CD4-positive, alpha-beta memory T cell (primary cell): ENCODE measurements at regions of chr7 and their contacts with region 1.

Region 1: DNA sequence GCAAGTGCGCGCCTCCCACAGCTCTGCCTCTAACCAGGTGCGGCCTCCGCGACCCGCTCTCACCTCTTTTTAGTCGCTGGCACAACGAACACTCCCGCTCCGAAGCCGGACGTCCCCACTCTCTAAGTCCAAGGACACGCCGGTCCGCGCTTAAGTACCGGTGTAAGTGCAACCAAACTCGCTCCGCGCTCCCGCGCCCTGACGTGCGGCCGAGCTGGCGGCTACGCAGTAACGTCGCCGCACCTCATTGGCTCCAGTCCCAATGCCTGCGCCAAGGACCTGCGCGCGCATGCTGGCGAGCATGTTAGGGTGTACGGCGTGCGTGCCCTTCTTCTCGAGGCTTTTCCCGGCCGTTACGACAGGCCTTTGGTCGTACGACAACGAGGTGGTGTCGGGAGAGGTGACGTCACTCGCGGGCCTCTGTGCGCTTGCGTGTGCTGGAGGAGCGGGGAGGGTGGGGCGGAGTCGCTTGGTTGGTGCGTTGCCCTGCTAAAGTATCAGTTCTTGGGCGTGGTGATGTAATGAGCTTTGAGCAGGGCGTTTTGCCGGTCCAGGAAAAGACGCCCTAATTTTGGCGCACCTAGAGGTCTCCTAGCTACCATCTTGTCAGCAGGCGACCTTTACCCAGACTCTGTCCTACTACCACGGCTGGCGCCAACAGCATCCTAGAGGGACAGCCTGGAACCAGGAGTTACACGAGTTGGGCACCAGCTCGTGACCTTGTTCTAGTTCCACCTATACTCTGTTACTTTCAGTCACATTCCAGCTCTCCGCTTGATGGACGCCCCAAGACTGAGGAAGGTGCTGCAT is at the start of gene CYCS:
- DNase-seq: peak; percentile 99 to 100 (median 99)
- H3K4me3 ChIP-seq: peak within 1 kb of the TSS; percentile 72 to 82
- H3K4me3 Mint-ChIP-seq: peak within 1 kb of the TSS; percentile 97 to 100 (median 100)
- H3K27ac ChIP-seq: peak within 1 kb of the TSS; percentile 97
- H3K27ac Mint-ChIP-seq: peak within 1 kb of the TSS; percentile 96 to 100 (median 100)
- H3K4me1 ChIP-seq: peaks cover 9% of the 10 kb centered on the region
- H3K4me1 Mint-ChIP-seq: peaks cover 14 to 26% (median 15%) of the 10 kb centered on the region in 4 donors
- H3K27me3 ChIP-seq: no peaks in the 10 kb centered on the region
- H3K27me3 Mint-ChIP-seq: no peaks in the 10 kb centered on the region
- total RNA-seq, gene CYCS: 46.9 to 54.2 TPM

Region 2: DNA sequence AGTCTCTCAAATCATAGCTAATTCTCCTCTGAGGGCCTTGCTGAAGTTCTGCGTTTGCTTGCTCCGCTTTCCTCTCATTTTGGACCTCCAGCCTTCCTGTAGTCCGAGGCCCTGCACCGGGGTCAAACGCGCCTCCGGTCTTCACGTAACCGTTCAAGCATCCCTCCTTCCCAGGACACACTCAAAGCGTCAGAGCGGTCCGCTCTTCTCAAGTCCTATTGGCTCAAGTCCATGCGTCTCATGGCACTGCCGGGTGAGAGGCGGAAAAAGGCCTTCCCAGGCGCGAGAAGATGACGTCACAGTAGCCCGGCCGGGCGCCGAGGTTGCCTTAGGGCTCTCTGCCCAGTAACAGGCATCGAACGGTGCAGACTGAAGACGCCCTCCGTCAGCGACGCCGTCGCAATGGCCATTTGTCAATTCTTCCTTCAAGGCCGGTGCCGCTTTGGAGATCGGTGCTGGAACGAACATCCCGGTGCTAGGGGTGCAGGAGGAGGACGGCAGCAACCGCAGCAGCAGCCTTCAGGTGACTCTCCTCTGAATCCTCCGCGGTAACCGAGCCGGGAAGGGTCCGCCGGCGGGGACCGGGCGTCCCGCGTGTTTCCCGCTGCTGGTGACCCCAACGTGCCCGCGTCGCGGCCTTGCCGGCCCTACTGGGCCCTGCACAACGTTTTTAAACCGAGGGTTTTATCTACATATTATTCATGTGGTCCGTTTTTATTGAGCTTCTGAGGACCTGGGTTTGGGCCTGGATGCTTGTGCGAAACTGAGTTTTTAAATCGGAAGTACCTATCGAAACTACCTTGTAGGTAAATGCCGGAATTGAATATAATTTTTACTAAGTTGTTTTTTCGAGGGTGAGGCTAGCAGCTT is 1943.4 kb before region 1 on chr7 and contains the start of gene NUP42:
- CTCF ChIA-PET with region 1: no interaction called
- POLR2A ChIA-PET with region 1: interaction called, 3 read pairs
- intact Hi-C with region 1: loop called (anchors 2 kb)
- DNase-seq: peak; percentile 93 to 96 (median 95)
- H3K4me3 ChIP-seq: peak within 1 kb of the TSS; percentile 95 to 98
- H3K4me3 Mint-ChIP-seq: peak within 1 kb of the TSS; percentile 94 to 100 (median 98)
- H3K27ac ChIP-seq: peak within 1 kb of the TSS; percentile 90
- H3K27ac Mint-ChIP-seq: peak within 1 kb of the TSS; percentile 96 to 100 (median 99)
- H3K4me1 ChIP-seq: peaks cover 38% of the 10 kb centered on the region
- H3K4me1 Mint-ChIP-seq: peaks cover 24 to 43% (median 27%) of the 10 kb centered on the region in 4 donors
- H3K27me3 ChIP-seq: no peaks in the 10 kb centered on the region
- H3K27me3 Mint-ChIP-seq: peaks cover 0 to 2% of the 10 kb centered on the region in 2 donors
- total RNA-seq, gene NUP42: 33.3 to 37.8 TPM

Region 3: GRCh38 chr7:23679898-23680413 is 1445.4 kb before region 1 on chr7 and contains the start of gene FAM221A:
- CTCF ChIA-PET with region 1: no interaction called
- POLR2A ChIA-PET with region 1: interaction called, 3 read pairs
- intact Hi-C with region 1: loop called (anchors 10 kb)
- DNase-seq: peak; percentile 71 to 86 (median 77)
- H3K4me3 ChIP-seq: peak within 1 kb of the TSS; percentile 79 to 83
- H3K4me3 Mint-ChIP-seq: peak within 1 kb of the TSS; percentile 93 to 97 (median 96)
- H3K27ac ChIP-seq: peak within 1 kb of the TSS; percentile 68
- H3K27ac Mint-ChIP-seq: peak within 1 kb of the TSS; percentile 78 to 93 (median 87)
- H3K4me1 ChIP-seq: peaks cover 4% of the 10 kb centered on the region
- H3K4me1 Mint-ChIP-seq: peaks cover 7 to 30% (median 16%) of the 10 kb centered on the region in 4 donors
- H3K27me3 ChIP-seq: no peaks in the 10 kb centered on the region
- H3K27me3 Mint-ChIP-seq: peaks cover 0 to 4% of the 10 kb centered on the region in 2 donors
- total RNA-seq, gene FAM221A: 6.8 to 7.3 TPM

Region 4: DNA sequence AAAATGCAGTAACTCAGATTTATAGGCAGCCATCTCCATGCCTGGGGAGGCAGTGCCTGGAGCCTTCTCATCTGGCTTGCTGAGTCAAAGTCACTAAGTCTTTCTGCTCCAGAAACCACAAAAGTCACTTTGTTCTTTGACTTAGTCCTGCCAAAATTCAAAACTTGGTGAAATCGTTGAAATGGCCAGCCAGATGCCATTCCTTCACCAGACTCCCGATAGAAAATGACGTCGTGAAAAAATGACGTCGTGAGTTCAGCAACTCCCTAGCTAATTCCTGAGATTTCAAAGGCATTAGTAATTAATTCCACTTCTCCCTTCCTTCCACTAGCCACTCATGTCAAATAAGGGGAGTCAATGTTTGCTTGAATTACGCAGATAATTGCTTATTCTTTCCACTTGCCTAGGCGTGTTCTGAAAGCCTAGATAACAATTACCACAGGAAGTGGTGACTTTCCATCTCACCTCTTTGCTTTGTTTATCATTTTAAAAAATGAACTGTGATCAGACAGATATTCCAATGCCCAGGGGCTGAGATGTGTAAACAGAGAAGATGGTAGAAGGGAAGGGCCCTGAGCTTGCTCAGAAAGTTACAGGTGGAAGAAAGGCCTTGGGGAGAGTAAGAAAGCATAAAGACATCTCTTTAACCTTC is 96.8 kb before region 1 on chr7:
- CTCF ChIA-PET with region 1: no interaction called
- POLR2A ChIA-PET with region 1: interaction called, 12 read pairs
- intact Hi-C with region 1: no loop called
- DNase-seq: peak; percentile 54 to 78 (median 71)
- H3K4me3 ChIP-seq: no peak overlapping the region
- H3K4me3 Mint-ChIP-seq: peak overlapping the region in 7 of 8 donors; percentile 61 to 92 (median 78)
- H3K27ac ChIP-seq: peak overlapping the region; percentile 53
- H3K27ac Mint-ChIP-seq: peak overlapping the region; percentile 67 to 97 (median 94)
- H3K4me1 ChIP-seq: peaks cover 55% of the 10 kb centered on the region
- H3K4me1 Mint-ChIP-seq: peaks cover 25 to 78% (median 62%) of the 10 kb centered on the region in 4 donors
- H3K27me3 ChIP-seq: no peaks in the 10 kb centered on the region
- H3K27me3 Mint-ChIP-seq: peaks cover 0 to 1% of the 10 kb centered on the region in 2 donors

Region 5: DNA sequence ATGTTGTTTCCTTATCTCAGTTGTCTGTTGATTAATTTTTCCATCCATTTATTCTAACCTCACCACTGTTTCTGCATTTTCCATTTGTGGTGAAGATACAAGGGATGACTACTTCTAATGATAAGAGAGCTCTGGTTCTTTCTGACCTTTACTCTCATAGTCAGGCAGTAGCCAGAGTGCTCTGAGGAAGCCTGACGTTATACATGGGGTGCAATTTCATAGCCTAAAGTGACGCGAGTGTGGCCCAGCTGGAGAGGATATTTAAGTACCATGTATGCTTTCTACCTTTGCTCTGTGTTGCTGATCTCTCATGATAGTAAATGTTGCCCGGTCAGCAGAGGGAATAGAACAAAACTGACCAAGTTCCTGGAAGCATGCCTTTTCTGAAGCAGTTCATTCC is 33.6 kb after region 1 on chr7:
- CTCF ChIA-PET with region 1: interaction called, 8 read pairs
- POLR2A ChIA-PET with region 1: interaction called, 4 read pairs
- intact Hi-C with region 1: loop called (anchors 1 kb)
- DNase-seq: no peak
- H3K4me3 ChIP-seq: no peak overlapping the region
- H3K4me3 Mint-ChIP-seq: no peak overlapping the region
- H3K27ac ChIP-seq: no peak overlapping the region
- H3K27ac Mint-ChIP-seq: no peak overlapping the region
- H3K4me1 ChIP-seq: no peaks in the 10 kb centered on the region
- H3K4me1 Mint-ChIP-seq: peaks cover 0 to 4% (median 2%) of the 10 kb centered on the region in 4 donors
- H3K27me3 ChIP-seq: no peaks in the 10 kb centered on the region
- H3K27me3 Mint-ChIP-seq: no peaks in the 10 kb centered on the region

Region 6: GRCh38 chr7:25179771-25180591 is 54.6 kb after region 1 on chr7:
- CTCF ChIA-PET with region 1: interaction called, 9 read pairs
- POLR2A ChIA-PET with region 1: interaction called, 13 read pairs
- intact Hi-C with region 1: loop called (anchors 1 kb)
- DNase-seq: peak; percentile 90 to 95 (median 91)
- H3K4me3 ChIP-seq: peak overlapping the region; percentile 45 to 71
- H3K4me3 Mint-ChIP-seq: peak overlapping the region; percentile 88 to 95 (median 92)
- H3K27ac ChIP-seq: peak overlapping the region; percentile 68
- H3K27ac Mint-ChIP-seq: peak overlapping the region; percentile 76 to 96 (median 93)
- H3K4me1 ChIP-seq: peaks cover 12% of the 10 kb centered on the region
- H3K4me1 Mint-ChIP-seq: peaks cover 5 to 27% (median 18%) of the 10 kb centered on the region in 4 donors
- H3K27me3 ChIP-seq: no peaks in the 10 kb centered on the region
- H3K27me3 Mint-ChIP-seq: no peaks in the 10 kb centered on the region